ENCODE measurements at regions of chr5 and their contacts with region 1.

Region 1: DNA sequence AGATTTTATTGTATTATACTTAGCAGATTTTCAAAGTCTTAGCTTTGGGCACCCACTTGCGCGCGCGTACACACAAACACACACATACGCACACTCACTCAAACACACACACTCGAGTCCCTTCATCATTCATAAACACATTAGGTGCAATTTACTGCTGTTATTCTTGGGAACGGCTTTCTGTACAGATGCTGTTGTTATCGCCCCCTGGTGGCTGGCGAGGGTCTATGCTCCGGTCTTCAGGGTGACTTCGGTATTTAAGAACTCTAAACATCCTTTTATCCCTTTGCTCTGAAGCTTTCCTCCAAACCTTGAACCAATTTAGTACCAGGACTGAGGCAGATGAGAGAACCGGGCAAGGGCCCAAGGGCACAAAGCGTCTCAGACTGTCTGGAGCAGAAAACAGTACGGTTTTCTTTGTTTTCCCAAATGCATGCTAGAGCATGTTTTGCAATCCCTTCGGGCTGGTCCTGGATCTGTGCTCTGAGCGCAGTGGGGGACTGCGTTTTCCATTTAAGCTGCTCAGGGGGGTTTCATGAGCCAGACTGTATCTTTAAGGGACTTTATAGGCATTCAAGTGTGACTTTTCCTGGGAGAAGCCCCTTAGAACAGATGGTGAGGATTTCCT is 1.7 kb upstream of the SLIT3 start:
- DNase-seq: peak; percentile 91
- H3K4me3 ChIP-seq: no peak overlapping the region
- H3K27ac ChIP-seq: peak overlapping the region in 3 of 4 donors; percentile 82 to 91 (median 88)
- H3K4me1 ChIP-seq: peaks cover 0 to 47% (median 32%) of the 10 kb centered on the region in 4 donors
- H3K27me3 ChIP-seq: peaks cover 0 to 9% (median 0%) of the 10 kb centered on the region in 3 donors
- CTCF ChIP-seq: peak; percentile 78 to 85 (median 80)
- EP300 ChIP-seq: no peak
- POLR2A ChIP-seq: no peak

Region 2: GRCh38 chr5:168679515-168679920 is 623.1 kb before region 1 on chr5:
- intact Hi-C with region 1: loop called (anchors 2 kb)
- DNase-seq: peak; percentile 83
- H3K4me3 ChIP-seq: no peak overlapping the region
- H3K27ac ChIP-seq: no peak overlapping the region
- H3K4me1 ChIP-seq: peaks cover 0 to 19% (median 4%) of the 10 kb centered on the region in 4 donors
- H3K27me3 ChIP-seq: no peaks in the 10 kb centered on the region
- CTCF ChIP-seq: peak; percentile 39 to 89 (median 74)
- EP300 ChIP-seq: no peak
- POLR2A ChIP-seq: no peak

Region 3: GRCh38 chr5:169003721-169004541 is 298.7 kb before region 1 on chr5:
- intact Hi-C with region 1: loop called (anchors 5 kb)
- DNase-seq: no peak
- H3K4me3 ChIP-seq: no peak overlapping the region
- H3K27ac ChIP-seq: peak overlapping the region in 2 of 4 donors; percentile 36 to 48
- H3K4me1 ChIP-seq: peaks cover 0 to 16% (median 9%) of the 10 kb centered on the region in 4 donors
- H3K27me3 ChIP-seq: no peaks in the 10 kb centered on the region
- CTCF ChIP-seq: peak in 2 of 4 experiments; percentile 40 to 48
- EP300 ChIP-seq: no peak
- POLR2A ChIP-seq: no peak

Region 4: DNA sequence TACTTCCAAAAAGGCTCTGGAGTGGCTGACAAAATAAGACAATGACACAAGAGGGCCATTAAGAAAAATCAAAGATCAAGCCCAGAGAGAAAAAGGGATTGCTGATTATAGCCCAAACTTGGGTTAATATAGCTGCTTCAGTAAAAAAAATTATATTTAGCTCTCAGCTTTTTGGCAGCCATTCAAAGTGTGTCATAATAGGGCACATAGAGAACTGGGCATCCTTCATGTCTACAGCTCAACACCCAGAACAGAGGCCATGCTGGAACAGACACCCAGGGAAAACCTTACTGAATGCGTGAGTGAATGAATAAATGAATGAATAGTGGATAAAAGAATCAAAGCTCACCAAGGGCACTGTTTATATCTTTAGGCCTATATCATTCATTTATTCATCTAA is 111.8 kb before region 1 on chr5:
- intact Hi-C with region 1: no loop called
- DNase-seq: no peak
- H3K4me3 ChIP-seq: no peak overlapping the region
- H3K27ac ChIP-seq: no peak overlapping the region
- H3K4me1 ChIP-seq: peaks cover 0 to 4% (median 0%) of the 10 kb centered on the region in 4 donors
- H3K27me3 ChIP-seq: no peaks in the 10 kb centered on the region
- CTCF ChIP-seq: no peak
- EP300 ChIP-seq: no peak
- POLR2A ChIP-seq: no peak

Region 5: DNA sequence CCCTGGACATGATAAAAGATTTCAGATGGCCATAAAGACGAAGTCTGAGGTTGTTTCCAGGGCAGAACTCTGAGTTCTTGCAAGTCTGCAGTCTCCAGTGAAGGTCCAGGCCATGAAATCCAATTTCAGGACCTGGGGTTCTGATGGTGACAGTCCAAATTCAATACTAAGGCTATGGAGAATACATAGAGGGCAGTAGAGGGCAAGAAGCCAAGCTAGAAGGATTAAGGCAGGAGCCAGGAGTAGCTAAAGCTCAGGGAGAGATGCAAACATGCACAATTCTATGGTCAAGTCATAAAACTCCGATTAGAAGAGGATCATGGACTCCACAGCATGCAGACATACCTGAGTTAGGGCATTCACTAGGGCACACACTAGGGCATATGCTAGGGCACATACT is 13.1 kb before region 1 on chr5:
- intact Hi-C with region 1: loop called (anchors 2 kb)
- DNase-seq: no peak
- H3K4me3 ChIP-seq: no peak overlapping the region
- H3K27ac ChIP-seq: peak overlapping the region; percentile 76 to 87 (median 80)
- H3K4me1 ChIP-seq: peaks cover 0 to 70% (median 56%) of the 10 kb centered on the region in 4 donors
- H3K27me3 ChIP-seq: no peaks in the 10 kb centered on the region
- CTCF ChIP-seq: no peak
- EP300 ChIP-seq: no peak
- POLR2A ChIP-seq: no peak

Region 6: GRCh38 chr5:169583424-169584204 is 281.0 kb after region 1 on chr5 and contains the start of gene SPDL1:
- intact Hi-C with region 1: loop called (anchors 5 kb)
- DNase-seq: peak; percentile 97
- H3K4me3 ChIP-seq: peak within 1 kb of the TSS; percentile 69 to 88 (median 80)
- H3K27ac ChIP-seq: peak within 1 kb of the TSS; percentile 78 to 87 (median 82)
- H3K4me1 ChIP-seq: peaks cover 0 to 18% (median 10%) of the 10 kb centered on the region in 4 donors
- H3K27me3 ChIP-seq: no peaks in the 10 kb centered on the region
- CTCF ChIP-seq: no peak
- EP300 ChIP-seq: no peak
- POLR2A ChIP-seq: no peak
- total RNA-seq, gene SPDL1: 3.0 to 14.7 (median 9.0) TPM